Naive thymus-derived CD8-positive, alpha-beta T cell (primary cell): ENCODE measurements at regions of chr11 and their contacts with region 1.

Region 1: GRCh38 chr11:326842-327580 is 6.4 kb upstream of the IFITM3 start:
- DNase-seq: peak; percentile 55 to 89 (median 78)
- ATAC-seq: peak; percentile 65 to 75
- H3K4me3 Mint-ChIP-seq: peak overlapping the region; percentile 70 to 87 (median 78)
- H3K27ac Mint-ChIP-seq: peak overlapping the region; percentile 95 to 99 (median 98)
- H3K4me1 Mint-ChIP-seq: peaks cover 40 to 88% (median 80%) of the 10 kb centered on the region in 4 donors
- H3K27me3 Mint-ChIP-seq: no peaks in the 10 kb centered on the region

Region 2: GRCh38 chr11:236774-237767 is 89.9 kb before region 1 on chr11 and contains the start of gene PSMD13:
- POLR2A ChIA-PET with region 1: no interaction called
- DNase-seq: peak; percentile 82 to 91 (median 86)
- ATAC-seq: peak; percentile 80 to 83
- H3K4me3 Mint-ChIP-seq: peak within 1 kb of the TSS; percentile 93 to 99 (median 98)
- H3K27ac Mint-ChIP-seq: peak within 1 kb of the TSS; percentile 89 to 100 (median 100)
- H3K4me1 Mint-ChIP-seq: peaks cover 20 to 61% (median 46%) of the 10 kb centered on the region in 4 donors
- H3K27me3 Mint-ChIP-seq: no peaks in the 10 kb centered on the region
- polyA plus RNA-seq, gene PSMD13: 196 to 223 (median 208) TPM

Region 3: DNA sequence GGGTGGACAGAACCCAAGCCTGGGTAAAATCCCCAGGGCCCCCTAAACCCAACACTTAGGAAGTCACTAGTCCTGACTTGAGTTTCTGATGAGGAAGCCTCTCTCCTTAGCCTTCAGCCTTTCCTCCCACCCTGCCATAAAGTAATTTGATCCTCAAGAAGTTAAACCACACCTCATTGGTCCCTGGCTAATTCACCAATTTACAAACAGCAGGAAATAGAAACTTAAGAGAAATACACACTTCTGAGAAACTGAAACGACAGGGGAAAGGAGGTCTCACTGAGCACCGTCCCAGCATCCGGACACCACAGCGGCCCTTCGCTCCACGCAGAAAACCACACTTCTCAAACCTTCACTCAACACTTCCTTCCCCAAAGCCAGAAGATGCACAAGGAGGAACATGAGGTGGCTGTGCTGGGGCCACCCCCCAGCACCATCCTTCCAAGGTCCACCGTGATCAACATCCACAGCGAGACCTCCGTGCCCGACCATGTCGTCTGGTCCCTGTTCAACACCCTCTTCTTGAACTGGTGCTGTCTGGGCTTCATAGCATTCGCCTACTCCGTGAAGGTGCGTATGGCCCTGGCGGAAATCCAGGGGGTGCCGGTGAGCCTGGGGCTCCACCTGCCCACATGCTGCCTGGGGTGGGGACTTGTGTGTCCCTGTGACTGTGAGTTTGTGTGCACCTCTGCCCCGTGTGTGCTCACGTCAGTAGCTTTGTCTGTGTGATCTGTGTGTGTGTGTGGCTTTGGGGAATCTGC is 13.0 kb before region 1 on chr11 and contains the start of gene IFITM1:
- POLR2A ChIA-PET with region 1: interaction called, 56 read pairs
- DNase-seq: peak in 9 of 10 donors; percentile 55 to 90 (median 82)
- ATAC-seq: peak; percentile 56 to 78
- H3K4me3 Mint-ChIP-seq: peak within 1 kb of the TSS; percentile 88 to 100 (median 97)
- H3K27ac Mint-ChIP-seq: peak within 1 kb of the TSS; percentile 94 to 99 (median 99)
- H3K4me1 Mint-ChIP-seq: peaks cover 30 to 50% (median 40%) of the 10 kb centered on the region in 4 donors
- H3K27me3 Mint-ChIP-seq: no peaks in the 10 kb centered on the region
- polyA plus RNA-seq, gene IFITM1: 1,833 to 2,198 (median 2,135) TPM